Cardiac septum (tissue), 1 donor: ENCODE measurements at regions of chr6 and their contacts with region 1.

Region 1: DNA sequence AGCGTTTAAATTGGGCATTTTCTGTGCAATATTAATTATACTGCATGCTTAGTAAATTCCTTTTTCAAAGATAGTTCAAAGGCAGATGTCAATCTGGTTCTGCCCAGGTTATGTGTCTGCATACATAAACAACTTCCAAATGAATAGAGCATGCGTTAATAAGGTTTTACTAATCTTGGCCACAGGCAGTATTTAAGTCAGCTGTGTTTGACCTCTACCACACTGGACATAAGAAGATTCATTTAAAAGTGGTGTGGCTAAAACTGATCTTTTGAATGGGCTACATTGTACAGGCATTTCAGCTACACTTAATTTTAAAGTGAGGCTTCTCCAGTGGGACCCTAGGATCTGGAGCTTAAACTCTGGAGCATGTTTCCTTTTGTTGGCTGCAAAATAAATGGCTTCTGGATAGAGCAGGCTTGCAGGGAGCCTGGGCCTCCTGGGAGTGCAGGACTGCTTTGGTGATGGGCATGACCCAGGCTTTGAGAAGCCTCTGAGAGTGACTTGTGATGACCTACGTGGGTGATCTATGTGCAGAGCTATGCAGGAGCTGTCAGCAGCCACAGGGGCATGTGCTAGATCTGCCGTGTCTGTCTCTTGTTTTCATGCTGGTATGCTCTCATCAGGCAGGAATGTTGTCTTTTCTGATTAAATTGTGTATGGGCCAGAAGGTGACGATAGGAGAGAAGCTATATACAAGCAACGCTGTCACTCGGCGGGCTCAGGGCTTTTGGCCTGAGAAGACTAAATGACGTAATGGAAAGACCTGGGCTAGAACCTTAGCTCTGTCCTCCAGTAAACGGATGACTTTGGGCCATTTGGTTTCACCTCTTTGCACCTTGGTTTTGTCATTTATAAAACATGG is 331.2 kb downstream of the QKI start:
- DNase-seq: peak; percentile 85

Region 2: GRCh38 chr6:163585932-163586437 is 159.8 kb before region 1 on chr6:
- intact Hi-C with region 1: loop called (anchors 10 kb)
- DNase-seq: no peak

Region 3: GRCh38 chr6:163645560-163645959 is 100.2 kb before region 1 on chr6:
- intact Hi-C with region 1: no loop called
- DNase-seq: no peak

Region 4: DNA sequence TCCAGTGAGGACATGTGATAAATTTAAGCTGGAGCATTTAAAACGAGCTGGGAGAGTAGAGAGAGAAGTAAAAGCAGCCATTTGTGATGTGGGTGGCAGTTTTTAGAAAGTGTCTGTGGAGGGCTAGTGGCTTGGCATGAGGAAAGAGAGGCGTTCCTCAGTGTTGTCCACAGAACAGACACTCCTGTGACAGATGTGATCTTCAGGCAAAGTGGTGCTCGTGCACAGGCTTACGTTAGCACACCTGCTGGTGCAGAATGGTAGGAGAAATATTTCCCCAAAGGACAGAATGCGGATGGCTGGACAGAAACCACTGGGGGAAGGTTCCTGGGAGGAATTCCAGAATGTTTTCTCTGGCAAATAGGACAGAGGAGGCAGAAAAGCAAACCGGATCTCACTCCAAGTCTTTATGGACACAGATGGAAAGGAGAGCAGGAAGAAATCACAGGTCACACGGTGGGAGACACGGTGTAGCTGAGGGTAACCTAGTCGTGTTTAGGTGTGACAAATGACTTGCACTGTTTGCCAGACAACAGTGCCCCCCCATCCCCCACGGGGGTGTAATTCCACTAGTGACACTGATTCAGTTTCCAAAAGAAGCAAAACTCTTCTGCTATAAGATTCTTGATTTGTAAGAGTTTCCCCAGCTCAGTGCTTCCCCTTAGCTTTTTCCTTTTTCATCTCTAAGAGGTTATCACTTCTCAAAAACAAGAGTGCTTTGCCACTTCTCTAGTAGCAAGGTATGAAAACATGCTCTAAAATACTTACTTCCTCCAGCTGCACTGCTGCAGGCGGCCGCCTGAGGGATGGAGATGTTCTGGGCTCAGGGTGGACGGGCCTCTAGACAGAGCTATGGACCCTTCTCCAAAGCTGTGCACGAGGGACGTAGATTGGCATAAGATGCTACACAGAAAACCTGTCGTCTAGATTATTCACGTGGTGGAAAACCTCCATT is 38.1 kb before region 1 on chr6:
- intact Hi-C with region 1: no loop called
- DNase-seq: no peak

Region 5: DNA sequence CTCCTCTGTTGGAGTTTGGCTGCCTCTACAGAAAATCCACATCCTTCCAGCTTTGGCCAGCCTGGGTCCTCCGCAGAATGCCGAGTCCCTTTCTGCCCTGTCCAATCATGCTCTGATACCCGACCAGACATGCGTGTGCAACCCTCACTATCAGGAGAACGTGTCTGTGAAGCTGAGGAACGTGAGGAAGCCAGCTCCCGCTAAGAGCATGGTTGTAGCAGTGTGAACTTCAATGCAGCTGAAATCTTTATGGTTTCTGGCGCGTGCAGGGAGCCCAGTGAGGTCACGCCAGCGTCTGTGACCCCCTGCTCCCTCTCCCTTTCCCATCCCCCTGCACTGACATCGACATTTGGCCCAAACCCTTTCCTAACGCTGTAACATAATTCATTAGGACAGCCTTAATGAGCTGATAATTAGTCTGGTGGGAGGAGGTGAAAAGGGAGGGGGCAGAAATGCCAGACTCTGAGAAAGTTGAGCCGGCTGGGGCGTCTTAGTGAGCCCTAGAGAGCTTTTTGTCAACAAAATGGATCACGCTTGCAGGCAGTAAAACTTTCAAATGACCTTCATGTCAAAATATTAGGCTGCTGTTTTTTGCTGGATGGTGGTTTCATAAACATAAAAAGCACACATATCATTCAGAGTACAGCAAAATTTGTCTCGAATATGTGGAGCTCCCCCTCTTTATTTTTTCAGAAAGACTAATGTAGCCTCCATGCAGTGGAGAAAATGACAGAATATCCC is 92.1 kb after region 1 on chr6:
- intact Hi-C with region 1: loop called (anchors 5 kb)
- DNase-seq: no peak

Region 6: GRCh38 chr6:163965426-163966348 is 219.9 kb after region 1 on chr6:
- intact Hi-C with region 1: loop called (anchors 5 kb)
- DNase-seq: no peak

Region 7: DNA sequence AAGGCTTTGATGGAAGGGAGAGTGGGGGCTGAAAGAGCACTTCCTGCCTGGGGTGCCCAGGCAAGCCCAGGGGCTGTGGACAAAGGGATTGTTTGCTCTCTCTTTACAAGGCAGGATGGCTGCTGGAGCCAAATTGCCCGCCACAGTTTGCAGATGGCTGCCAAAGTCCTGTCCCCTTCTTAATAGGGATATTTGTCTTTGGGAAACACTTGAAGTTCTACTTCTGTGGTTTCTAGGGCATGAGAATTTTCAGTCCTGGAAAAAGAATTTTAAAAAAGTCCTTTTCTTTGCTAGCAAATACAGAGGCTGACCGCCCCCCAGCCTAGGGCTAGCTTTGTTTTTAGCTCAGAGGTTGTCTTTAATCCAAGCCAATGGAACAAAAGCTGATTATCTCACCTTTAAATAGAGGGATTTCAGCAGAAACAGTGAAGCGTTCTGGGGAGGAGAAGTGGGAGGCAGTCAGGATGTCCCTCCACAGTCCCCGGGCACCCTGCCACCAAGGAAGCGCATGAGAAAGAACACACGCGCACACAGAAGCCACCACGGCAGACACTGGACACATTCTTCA is 405.5 kb after region 1 on chr6:
- intact Hi-C with region 1: loop called (anchors 5 kb)
- DNase-seq: peak; percentile 80